Upper lobe of right lung (tissue), 1 donor: ENCODE measurements at regions of chr10 and their contacts with region 1.

Region 1: DNA sequence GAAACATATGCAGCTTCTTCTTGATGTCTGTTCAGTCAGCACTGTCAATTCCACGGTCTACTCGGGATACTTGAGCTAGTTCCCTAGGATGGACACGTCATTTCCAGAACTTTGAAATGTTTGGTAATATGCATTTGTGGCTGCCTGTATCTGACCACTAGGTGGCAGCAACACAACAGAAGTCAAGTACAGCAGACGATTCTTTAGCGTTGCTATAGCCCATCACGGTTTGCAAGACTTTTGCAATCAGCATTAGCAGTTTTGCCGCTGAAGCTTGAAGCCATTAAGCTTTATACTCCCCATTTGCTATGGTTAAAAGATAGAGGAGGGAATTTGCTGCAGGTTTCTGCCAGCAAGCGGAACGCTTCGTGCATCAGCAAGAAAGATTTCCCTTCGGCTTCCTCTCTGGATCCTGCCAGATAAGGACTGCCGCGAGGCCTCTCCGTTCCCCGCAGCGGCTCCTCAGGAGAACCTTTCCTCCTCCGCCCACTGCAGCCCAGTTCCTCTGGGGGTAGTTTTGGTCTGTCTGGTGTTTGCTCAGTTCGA is 63.5 kb downstream of the ABCC2 start:
- DNase-seq: no peak
- ATAC-seq: peak; percentile 97
- H3K4me3 ChIP-seq: peak overlapping the region; percentile 37
- H3K27ac ChIP-seq: no peak overlapping the region
- H3K4me1 ChIP-seq: peaks cover 8% of the 10 kb centered on the region
- H3K27me3 ChIP-seq: no peaks in the 10 kb centered on the region
- CTCF ChIP-seq: peak; percentile 97

Region 2: DNA sequence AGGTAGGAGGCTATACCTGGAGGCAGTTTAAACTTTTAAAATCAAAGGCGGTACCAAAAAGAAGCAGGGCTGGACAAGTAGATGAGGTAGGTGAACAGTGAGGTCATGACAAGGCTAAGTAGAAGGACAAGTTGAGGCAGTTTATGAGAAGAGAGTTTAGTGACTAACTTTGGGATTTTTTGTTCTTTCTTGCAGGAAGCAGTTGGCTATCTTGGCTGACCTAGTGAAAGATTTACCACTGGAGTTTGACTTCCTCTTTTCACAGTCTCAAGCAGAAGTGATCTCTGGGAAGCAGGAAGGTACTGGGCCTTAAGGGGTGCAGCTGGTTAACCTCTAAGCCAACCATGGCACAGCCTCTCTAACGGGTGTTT is 160.3 kb before region 1 on chr10:
- intact Hi-C with region 1: no loop called
- DNase-seq: no peak
- ATAC-seq: peak; percentile 89
- H3K4me3 ChIP-seq: no peak overlapping the region
- H3K27ac ChIP-seq: no peak overlapping the region
- H3K4me1 ChIP-seq: no peaks in the 10 kb centered on the region
- H3K27me3 ChIP-seq: no peaks in the 10 kb centered on the region
- CTCF ChIP-seq: no peak

Region 3: DNA sequence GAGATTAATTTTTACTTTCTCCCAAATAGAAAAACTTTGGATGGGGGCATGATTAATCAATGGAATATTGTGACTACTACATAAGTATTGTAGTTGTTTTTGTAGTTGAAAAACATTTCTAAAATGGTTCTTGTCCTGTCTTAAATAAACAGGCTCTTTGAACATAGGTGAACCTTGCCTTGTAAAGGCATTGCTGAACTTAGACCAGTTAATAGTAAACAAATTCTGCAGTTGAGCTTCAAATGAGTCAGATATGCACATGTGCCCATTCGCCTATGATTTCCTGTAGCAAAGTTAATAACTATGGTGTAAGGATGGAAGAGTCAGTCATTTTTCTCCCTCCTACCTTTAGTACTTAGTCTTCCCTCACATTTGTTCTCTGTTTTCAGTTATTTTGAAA is 91.2 kb before region 1 on chr10:
- intact Hi-C with region 1: no loop called
- DNase-seq: no peak
- ATAC-seq: no peak
- H3K4me3 ChIP-seq: no peak overlapping the region
- H3K27ac ChIP-seq: no peak overlapping the region
- H3K4me1 ChIP-seq: no peaks in the 10 kb centered on the region
- H3K27me3 ChIP-seq: no peaks in the 10 kb centered on the region
- CTCF ChIP-seq: no peak

Region 4: DNA sequence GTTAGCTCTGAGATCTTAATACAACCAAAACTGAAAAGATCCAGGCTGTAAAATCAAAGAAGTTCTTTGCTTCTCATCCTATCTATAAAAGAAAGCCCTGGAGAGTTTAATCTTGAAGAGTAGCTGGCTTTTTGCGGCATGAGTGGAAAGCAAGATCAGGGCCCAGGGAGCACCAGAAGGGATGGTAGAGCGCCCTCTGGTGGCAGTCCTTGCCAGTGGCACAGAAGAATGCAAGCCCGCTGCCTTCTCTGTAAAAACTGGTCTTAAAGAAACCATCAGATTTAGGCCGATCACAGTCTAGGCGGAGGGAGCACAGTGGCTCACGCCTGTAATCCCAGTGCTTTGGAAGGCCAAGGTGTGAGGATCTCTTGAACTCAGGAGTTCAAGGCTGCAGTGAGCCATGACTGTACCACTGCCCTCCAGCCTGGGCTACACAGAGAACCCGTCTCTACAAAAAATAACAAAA is 200.1 kb after region 1 on chr10:
- intact Hi-C with region 1: loop called (anchors 5 kb)
- DNase-seq: peak; percentile 90
- ATAC-seq: peak; percentile 95
- H3K4me3 ChIP-seq: no peak overlapping the region
- H3K27ac ChIP-seq: no peak overlapping the region
- H3K4me1 ChIP-seq: peaks cover 7% of the 10 kb centered on the region
- H3K27me3 ChIP-seq: no peaks in the 10 kb centered on the region
- CTCF ChIP-seq: peak; percentile 93